Naive thymus-derived CD8-positive, alpha-beta T cell (primary cell): ENCODE measurements at regions of chr9 and their contacts with region 1.

Region 1: GRCh38 chr9:136944519-136945279 is at the starts of genes C8G and FBXW5:
- DNase-seq: peak; percentile 88 to 96 (median 94)
- ATAC-seq: peak; percentile 77 to 87
- H3K4me3 Mint-ChIP-seq: peak within 1 kb of the TSS; percentile 72 to 92 (median 82)
- H3K27ac Mint-ChIP-seq: peak within 1 kb of the TSS in 9 of 10 donors; percentile 74 to 95 (median 77)
- H3K4me1 Mint-ChIP-seq: peaks cover 5 to 32% (median 14%) of the 10 kb centered on the region in 4 donors
- H3K27me3 Mint-ChIP-seq: no peaks in the 10 kb centered on the region
- polyA plus RNA-seq, gene C8G: 1.6 TPM in 1 of 3 donors, not detected in the others
- polyA plus RNA-seq, gene FBXW5: 62.9 to 92.1 (median 83.7) TPM

Region 2: GRCh38 chr9:136885950-136886578 is 58.6 kb before region 1 on chr9 and contains the start of gene TRAF2:
- POLR2A ChIA-PET with region 1: interaction called, 14 read pairs
- DNase-seq: peak; percentile 92 to 98 (median 96)
- ATAC-seq: peak; percentile 94 to 96
- H3K4me3 Mint-ChIP-seq: peak within 1 kb of the TSS; percentile 75 to 92 (median 86)
- H3K27ac Mint-ChIP-seq: peak within 1 kb of the TSS; percentile 66 to 92 (median 86)
- H3K4me1 Mint-ChIP-seq: peaks cover 6 to 53% (median 36%) of the 10 kb centered on the region in 4 donors
- H3K27me3 Mint-ChIP-seq: no peaks in the 10 kb centered on the region
- polyA plus RNA-seq, gene TRAF2: 7.9 to 24.4 (median 12.2) TPM

Region 3: GRCh38 chr9:136928591-136928990 is 16.1 kb before region 1 on chr9:
- POLR2A ChIA-PET with region 1: no interaction called
- DNase-seq: peak in 1 of 10 donors; percentile 56
- ATAC-seq: no peak
- H3K4me3 Mint-ChIP-seq: no peak overlapping the region
- H3K27ac Mint-ChIP-seq: peak overlapping the region in 3 of 10 donors; percentile 4 to 42 (median 25)
- H3K4me1 Mint-ChIP-seq: peaks cover 0 to 6% (median 5%) of the 10 kb centered on the region in 4 donors
- H3K27me3 Mint-ChIP-seq: no peaks in the 10 kb centered on the region

Region 4: DNA sequence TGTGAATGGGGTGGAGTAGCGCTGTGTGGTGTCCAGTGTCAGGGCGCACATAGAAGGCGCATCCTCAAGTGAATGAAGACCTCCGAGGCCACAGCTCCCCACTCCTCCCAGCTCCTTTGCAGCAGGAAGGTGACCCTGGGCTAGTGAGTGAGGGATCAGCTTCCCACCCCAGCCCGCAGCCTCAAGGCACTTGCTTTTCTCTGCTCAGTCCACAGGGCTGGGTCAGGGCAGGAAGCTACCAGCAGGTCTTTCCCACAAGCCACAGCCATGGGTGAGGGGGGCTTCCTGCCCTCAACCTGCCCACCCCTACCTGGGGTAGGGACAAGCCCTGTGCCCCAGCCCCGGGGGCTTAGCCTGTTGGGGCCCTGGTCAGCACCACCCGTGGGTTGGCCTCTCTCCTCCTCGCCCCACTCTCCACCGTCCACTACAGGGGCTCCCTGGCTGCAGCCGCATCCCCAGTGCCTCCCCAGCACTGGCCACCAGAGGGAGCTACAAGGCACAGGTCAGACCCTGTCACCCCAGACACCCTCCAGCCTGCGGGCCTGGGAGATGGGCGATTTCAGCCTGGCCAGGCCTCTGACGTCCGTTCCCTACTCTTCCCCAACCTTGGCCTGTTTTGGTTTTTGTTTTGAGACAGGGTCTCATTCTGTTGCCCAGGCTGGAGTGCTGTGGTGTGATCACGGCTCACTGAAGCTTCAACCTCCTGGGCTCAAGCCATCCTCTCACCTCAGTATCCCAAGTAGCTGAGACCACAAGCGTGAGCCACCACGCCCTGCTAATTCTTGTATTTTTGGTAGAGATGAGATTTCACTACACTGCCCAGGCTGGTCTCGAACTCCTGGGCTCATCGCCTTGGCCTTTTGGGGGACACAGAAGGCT is 84.6 kb after region 1 on chr9:
- POLR2A ChIA-PET with region 1: interaction called, 26 read pairs
- DNase-seq: peak; percentile 29 to 76 (median 62)
- ATAC-seq: peak; percentile 15 to 29
- H3K4me3 Mint-ChIP-seq: peak overlapping the region; percentile 75 to 88 (median 83)
- H3K27ac Mint-ChIP-seq: peak overlapping the region; percentile 56 to 88 (median 72)
- H3K4me1 Mint-ChIP-seq: peaks cover 16 to 68% (median 61%) of the 10 kb centered on the region in 4 donors
- H3K27me3 Mint-ChIP-seq: no peaks in the 10 kb centered on the region